ENCODE measurements at regions of chr9 and their contacts with region 1.

Region 1: GRCh38 chr9:113275157-113276131 is at the starts of genes CDC26 and PRPF4:
- DNase-seq: peak; percentile 98
- ATAC-seq: peak; percentile 96
- H3K4me3 Mint-ChIP-seq: no peak within 1 kb of the TSS
- H3K27ac Mint-ChIP-seq: no peak within 1 kb of the TSS
- H3K4me1 Mint-ChIP-seq: peaks cover 32% of the 10 kb centered on the region
- H3K27me3 Mint-ChIP-seq: no peaks in the 10 kb centered on the region
- total RNA-seq, gene CDC26: 25.6 to 33.6 TPM
- total RNA-seq, gene PRPF4: 34.0 to 43.4 TPM

Region 2: GRCh38 chr9:112955550-112955949 is 319.9 kb before region 1 on chr9:
- CTCF ChIA-PET with region 1: no interaction called
- DNase-seq: no peak
- ATAC-seq: no peak
- H3K4me3 Mint-ChIP-seq: no peak overlapping the region
- H3K27ac Mint-ChIP-seq: no peak overlapping the region
- H3K4me1 Mint-ChIP-seq: no peaks in the 10 kb centered on the region
- H3K27me3 Mint-ChIP-seq: no peaks in the 10 kb centered on the region

Region 3: GRCh38 chr9:113205432-113205831 is 70.0 kb before region 1 on chr9:
- CTCF ChIA-PET with region 1: no interaction called
- DNase-seq: no peak
- ATAC-seq: no peak
- H3K4me3 Mint-ChIP-seq: no peak overlapping the region
- H3K27ac Mint-ChIP-seq: no peak overlapping the region
- H3K4me1 Mint-ChIP-seq: peaks cover 6% of the 10 kb centered on the region
- H3K27me3 Mint-ChIP-seq: no peaks in the 10 kb centered on the region

Region 4: DNA sequence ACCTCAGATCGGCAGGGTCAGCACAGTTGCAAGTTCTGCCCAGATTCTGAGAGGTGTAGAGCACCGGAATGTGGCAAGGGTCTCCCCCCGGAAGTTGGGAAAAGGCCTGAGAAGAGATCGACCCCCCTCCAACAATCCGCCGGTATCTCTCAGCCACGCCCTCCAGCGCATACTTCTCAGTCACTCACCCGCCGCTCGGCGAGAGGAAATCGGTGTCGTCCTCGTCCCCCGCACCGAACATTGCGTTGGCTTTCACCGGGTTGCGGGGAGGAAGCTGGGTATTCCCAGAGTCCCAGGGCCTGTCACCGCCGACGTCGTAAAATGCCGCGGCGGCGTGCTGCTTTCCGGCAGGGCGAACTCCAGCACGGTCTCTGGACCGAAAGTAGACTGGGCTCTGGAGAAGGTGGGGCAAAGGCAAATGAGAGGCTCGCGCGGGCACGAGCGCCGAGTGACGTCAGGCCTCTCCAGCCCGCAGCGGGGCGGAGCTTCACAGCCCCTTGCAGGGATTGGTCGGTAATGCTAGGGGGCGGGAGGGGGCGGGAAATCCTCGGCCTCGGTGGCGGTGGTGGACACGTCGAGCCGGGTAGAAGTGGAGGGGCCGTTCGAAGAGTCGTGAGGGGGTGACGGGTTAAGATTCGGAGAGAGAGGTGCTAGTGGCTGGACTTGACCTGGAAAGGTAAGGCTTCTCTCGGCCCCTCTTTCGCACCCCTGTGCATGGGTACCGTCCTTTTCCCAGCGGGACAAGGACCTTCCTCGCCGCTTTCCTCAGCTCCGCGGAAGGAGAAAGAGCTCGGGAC is 54.2 kb before region 1 on chr9 and contains the starts of genes FKBP15 and SLC31A1:
- CTCF ChIA-PET with region 1: interaction called, 31 read pairs
- DNase-seq: peak; percentile 98
- ATAC-seq: peak; percentile 95
- H3K4me3 Mint-ChIP-seq: peak within 1 kb of the TSS; percentile 88
- H3K27ac Mint-ChIP-seq: peak within 1 kb of the TSS; percentile 93
- H3K4me1 Mint-ChIP-seq: peaks cover 53% of the 10 kb centered on the region
- H3K27me3 Mint-ChIP-seq: no peaks in the 10 kb centered on the region
- total RNA-seq, gene FKBP15: 40.4 to 42.8 TPM
- total RNA-seq, gene SLC31A1: 8.7 to 12.2 TPM

Region 5: DNA sequence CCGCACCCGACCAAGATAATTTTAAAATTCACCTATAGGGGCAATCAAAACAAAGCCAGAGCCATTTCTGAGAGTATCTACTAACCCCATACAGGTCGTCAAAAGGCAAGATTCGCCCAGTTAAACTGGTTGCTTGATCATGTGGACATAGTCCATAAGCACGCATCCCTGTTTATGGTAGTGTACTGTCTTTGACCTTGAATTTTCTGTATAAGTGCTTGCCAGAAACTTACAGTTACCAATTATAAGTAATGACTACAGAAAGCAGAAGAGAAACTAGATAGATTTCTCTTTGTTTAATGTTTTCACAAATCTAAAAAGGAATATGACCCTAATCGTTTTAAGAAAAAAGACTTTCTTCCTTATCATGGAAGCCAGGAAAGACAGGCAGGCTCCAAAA is 28.5 kb before region 1 on chr9:
- CTCF ChIA-PET with region 1: no interaction called
- DNase-seq: no peak
- ATAC-seq: no peak
- H3K4me3 Mint-ChIP-seq: no peak overlapping the region
- H3K27ac Mint-ChIP-seq: no peak overlapping the region
- H3K4me1 Mint-ChIP-seq: no peaks in the 10 kb centered on the region
- H3K27me3 Mint-ChIP-seq: no peaks in the 10 kb centered on the region

Region 6: GRCh38 chr9:113293285-113293878 is 17.9 kb after region 1 on chr9:
- CTCF ChIA-PET with region 1: interaction called, 11 read pairs
- DNase-seq: no peak
- ATAC-seq: peak; percentile 23
- H3K4me3 Mint-ChIP-seq: no peak overlapping the region
- H3K27ac Mint-ChIP-seq: peak overlapping the region; percentile 38
- H3K4me1 Mint-ChIP-seq: peaks cover 21% of the 10 kb centered on the region
- H3K27me3 Mint-ChIP-seq: no peaks in the 10 kb centered on the region

Region 7: GRCh38 chr9:113410207-113410864 is 134.9 kb after region 1 on chr9 and contains the starts of genes C9orf43 and POLE3:
- CTCF ChIA-PET with region 1: interaction called, 60 read pairs
- DNase-seq: peak; percentile 96
- ATAC-seq: peak; percentile 94
- H3K4me3 Mint-ChIP-seq: peak within 1 kb of the TSS; percentile 92
- H3K27ac Mint-ChIP-seq: peak within 1 kb of the TSS; percentile 99
- H3K4me1 Mint-ChIP-seq: peaks cover 37% of the 10 kb centered on the region
- H3K27me3 Mint-ChIP-seq: no peaks in the 10 kb centered on the region
- total RNA-seq, gene C9orf43: 0.16 to 0.41 TPM
- total RNA-seq, gene POLE3: 55.0 to 72.7 TPM